HCT116 (cell line): ENCODE measurements at regions of chr5 and their contacts with region 1.

Region 1: GRCh38 chr5:71932655-71933338 is 174.5 kb upstream of the MAP1B start:
- DNase-seq: peak; percentile 36
- ATAC-seq: peak; percentile 72
- H3K4me3 ChIP-seq: peak overlapping the region in 1 of 2 experiments; percentile 10; a peak in 3 of 4 replicates
- H3K27ac ChIP-seq: peak overlapping the region; percentile 54
- H3K4me1 ChIP-seq: peaks cover 17 to 27% of the 10 kb centered on the region in 2 experiments
- H3K27me3 ChIP-seq: no peaks in the 10 kb centered on the region
- CTCF ChIP-seq: no peak
- POLR2A ChIP-seq: no peak
- RAD21 ChIP-seq: no peak

Region 2: GRCh38 chr5:71922584-71923106 is 10.2 kb before region 1 on chr5:
- CTCF ChIA-PET with region 1: interaction called, 5 read pairs
- POLR2A ChIA-PET with region 1: interaction called, 24 read pairs
- RAD21 ChIA-PET with region 1: no interaction called
- intact Hi-C with region 1: no loop called
- DNase-seq: peak; percentile 85
- ATAC-seq: peak; percentile 96
- H3K4me3 ChIP-seq: peak overlapping the region; percentile 8 to 24; a peak in 3 of 4 replicates
- H3K27ac ChIP-seq: peak overlapping the region; percentile 48; the same call in 1 of the 2 replicates
- H3K4me1 ChIP-seq: peaks cover 6 to 34% of the 10 kb centered on the region in 2 experiments; a peak in 3 of 4 replicates
- H3K27me3 ChIP-seq: no peaks in the 10 kb centered on the region
- CTCF ChIP-seq: peak in 1 of 3 experiments; percentile 43; a peak in 1 of 6 replicates
- POLR2A ChIP-seq: no peak
- RAD21 ChIP-seq: peak; percentile 61

Region 3: GRCh38 chr5:72268753-72269410 is 336.1 kb after region 1 on chr5:
- CTCF ChIA-PET with region 1: no interaction called
- POLR2A ChIA-PET with region 1: no interaction called
- RAD21 ChIA-PET with region 1: no interaction called
- intact Hi-C with region 1: loop called (anchors 10 kb)
- DNase-seq: peak; percentile 44
- ATAC-seq: peak; percentile 70
- H3K4me3 ChIP-seq: no peak overlapping the region
- H3K27ac ChIP-seq: no peak overlapping the region
- H3K4me1 ChIP-seq: no peaks in the 10 kb centered on the region
- H3K27me3 ChIP-seq: no peaks in the 10 kb centered on the region
- CTCF ChIP-seq: peak; percentile 56 to 90 (median 75); a peak in 5 of 6 replicates
- POLR2A ChIP-seq: no peak
- RAD21 ChIP-seq: peak; percentile 70